Ascending aorta (tissue), 2 donors: ENCODE measurements at regions of chr2 and their contacts with region 1.

Region 1: GRCh38 chr2:202033321-202034248 is at the start of gene FZD7:
- DNase-seq: peak; percentile 72 to 95
- H3K4me3 ChIP-seq: peak within 1 kb of the TSS; percentile 61 to 81
- H3K27ac ChIP-seq: peak within 1 kb of the TSS; percentile 95 to 96
- H3K4me1 ChIP-seq: peaks cover 0 to 15% of the 10 kb centered on the region in 2 donors
- H3K27me3 ChIP-seq: no peaks in the 10 kb centered on the region
- CTCF ChIP-seq: peak in 1 of 3 experiments; percentile 28
- total RNA-seq, gene FZD7: 32.5 TPM

Region 2: GRCh38 chr2:201642579-201643215 is 390.9 kb before region 1 on chr2:
- intact Hi-C with region 1: loop called (anchors 5 kb)
- DNase-seq: peak; percentile 34 to 89
- H3K4me3 ChIP-seq: peak overlapping the region; percentile 85 to 99
- H3K27ac ChIP-seq: peak overlapping the region; percentile 97 to 100
- H3K4me1 ChIP-seq: peaks cover 0 to 7% of the 10 kb centered on the region in 2 donors
- H3K27me3 ChIP-seq: no peaks in the 10 kb centered on the region
- CTCF ChIP-seq: no peak

Region 3: DNA sequence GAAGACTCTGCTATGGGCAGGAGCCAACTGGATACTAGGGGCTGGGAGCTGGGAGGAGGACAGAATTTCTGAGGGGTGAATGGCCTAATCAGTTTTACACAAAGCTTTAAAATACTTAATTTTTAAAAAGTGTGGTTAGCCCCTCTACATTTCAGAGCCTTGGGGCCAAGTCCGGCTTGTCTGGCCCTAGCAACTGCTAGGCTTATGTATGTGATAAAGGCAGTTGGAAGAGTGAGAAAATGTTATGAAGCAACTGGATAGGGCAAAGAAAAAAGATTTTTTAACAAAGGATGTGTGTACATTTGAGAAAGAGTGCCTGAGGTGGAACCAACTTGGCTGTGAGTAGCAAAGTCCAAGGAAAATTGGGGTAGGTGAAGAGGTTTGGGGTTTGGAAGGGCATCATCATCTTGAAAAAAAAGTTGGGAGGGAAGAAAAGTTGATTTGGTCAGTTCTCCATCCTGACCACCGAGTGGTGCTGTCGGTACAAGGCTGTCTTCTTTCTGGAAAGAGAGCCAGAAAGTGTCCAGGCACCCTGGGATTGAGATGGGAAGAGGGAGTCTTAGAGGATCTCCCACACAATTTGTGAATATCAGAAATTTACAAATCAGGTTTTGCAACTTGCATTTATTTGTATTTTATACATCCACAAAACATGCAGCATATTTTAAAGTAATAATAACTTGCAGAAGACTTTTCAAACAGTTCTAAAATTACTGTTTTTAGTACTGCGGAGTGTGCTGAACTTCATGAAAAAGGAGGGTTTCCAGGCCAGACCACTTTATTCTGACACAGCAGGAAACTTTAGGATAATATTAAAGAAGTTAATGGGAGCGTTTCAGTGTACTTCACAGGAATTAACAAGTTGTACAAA is 237.7 kb before region 1 on chr2:
- intact Hi-C with region 1: loop called (anchors 1 kb)
- DNase-seq: no peak
- H3K4me3 ChIP-seq: no peak overlapping the region
- H3K27ac ChIP-seq: peak overlapping the region; percentile 81 to 86
- H3K4me1 ChIP-seq: peaks cover 4 to 17% of the 10 kb centered on the region in 2 donors
- H3K27me3 ChIP-seq: no peaks in the 10 kb centered on the region
- CTCF ChIP-seq: peak; percentile 58 to 86 (median 65)

Region 4: GRCh38 chr2:202178342-202178958 is 144.9 kb after region 1 on chr2:
- intact Hi-C with region 1: loop called (anchors 5 kb)
- DNase-seq: peak in 1 of 2 donors; percentile 78
- H3K4me3 ChIP-seq: no peak overlapping the region
- H3K27ac ChIP-seq: no peak overlapping the region
- H3K4me1 ChIP-seq: no peaks in the 10 kb centered on the region
- H3K27me3 ChIP-seq: no peaks in the 10 kb centered on the region
- CTCF ChIP-seq: peak; percentile 72 to 79 (median 78)